ENCODE measurements at regions of chr15 and their contacts with region 1.

Region 1: GRCh38 chr15:68484696-68485400 is 52.9 kb upstream of the ITGA11 start:
- DNase-seq: peak; percentile 86

Region 2: GRCh38 chr15:68447209-68447608 is 37.6 kb before region 1 on chr15:
- intact Hi-C with region 1: loop called in 1 of 2 experiments (anchors 1 kb)
- DNase-seq: no peak

Region 3: GRCh38 chr15:68517285-68517761 is 32.5 kb after region 1 on chr15:
- intact Hi-C with region 1: loop called in 1 of 2 experiments (anchors 5 kb)
- DNase-seq: no peak